GM12878 (cell line): ENCODE measurements at regions of chrX and their contacts with region 1.

Region 1: GRCh38 chrX:136694431-136695087 is 46.6 kb downstream of the CD40LG start:
- DNase-seq: no peak
- ATAC-seq: peak; percentile 89
- H3K4me3 ChIP-seq: no peak overlapping the region
- H3K27ac ChIP-seq: peak overlapping the region; percentile 35
- H3K4me1 ChIP-seq: peaks cover 20% of the 10 kb centered on the region
- H3K27me3 ChIP-seq: no peaks in the 10 kb centered on the region; a peak in 1 of 4 replicates
- CTCF ChIP-seq: peak; percentile 72 to 85 (median 72)
- EP300 ChIP-seq: no peak
- POLR2A ChIP-seq: no peak
- RAD21 ChIP-seq: peak; percentile 96

Region 2: GRCh38 chrX:136028251-136028984 is 666.1 kb before region 1 on chrX:
- CTCF ChIA-PET with region 1: interaction called, 14 read pairs
- POLR2A ChIA-PET with region 1: no interaction called
- RAD21 ChIA-PET with region 1: interaction called, 11 read pairs
- SMC1A ChIA-PET with region 1: interaction called, 11 read pairs
- in situ Hi-C with region 1: loop called (anchors 10 kb)
- intact Hi-C with region 1: loop called (anchors 5 kb)
- DNase-seq: no peak
- ATAC-seq: peak; percentile 81
- H3K4me3 ChIP-seq: no peak overlapping the region
- H3K27ac ChIP-seq: no peak overlapping the region
- H3K4me1 ChIP-seq: no peaks in the 10 kb centered on the region
- H3K27me3 ChIP-seq: no peaks in the 10 kb centered on the region
- CTCF ChIP-seq: peak; percentile 44 to 64 (median 62); a peak in 5 of 6 replicates
- EP300 ChIP-seq: no peak
- POLR2A ChIP-seq: no peak
- RAD21 ChIP-seq: peak; percentile 82

Region 3: GRCh38 chrX:136275553-136275952 is 419.0 kb before region 1 on chrX:
- CTCF ChIA-PET with region 1: interaction called, 6 read pairs
- POLR2A ChIA-PET with region 1: no interaction called
- RAD21 ChIA-PET with region 1: interaction called, 6 read pairs
- SMC1A ChIA-PET with region 1: interaction called, 7 read pairs
- in situ Hi-C with region 1: no loop called
- intact Hi-C with region 1: loop called (anchors 5 kb)
- DNase-seq: no peak
- ATAC-seq: no peak
- H3K4me3 ChIP-seq: no peak overlapping the region
- H3K27ac ChIP-seq: no peak overlapping the region
- H3K4me1 ChIP-seq: no peaks in the 10 kb centered on the region; the same call in 1 of the 2 replicates
- H3K27me3 ChIP-seq: no peaks in the 10 kb centered on the region
- CTCF ChIP-seq: no peak
- EP300 ChIP-seq: no peak
- POLR2A ChIP-seq: no peak
- RAD21 ChIP-seq: no peak

Region 4: DNA sequence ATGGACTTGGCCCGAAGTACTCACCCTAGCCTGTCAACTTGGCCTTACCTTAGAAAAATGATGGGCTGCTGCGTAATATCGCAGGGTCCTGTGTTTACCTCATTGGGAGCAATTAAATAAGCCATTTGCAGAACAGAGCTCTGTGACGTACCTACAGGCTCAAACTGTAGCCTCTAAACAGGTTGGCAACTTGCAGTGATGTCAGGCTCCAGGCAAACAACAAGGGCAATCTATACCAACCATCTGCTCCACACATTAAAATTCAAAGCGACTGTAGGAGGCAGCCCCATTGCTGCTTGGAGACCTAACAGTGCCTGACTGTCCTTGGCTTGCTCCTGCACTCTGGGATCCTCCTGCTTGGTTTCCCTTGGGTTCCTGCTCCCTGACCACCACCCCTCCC is 145.3 kb before region 1 on chrX:
- CTCF ChIA-PET with region 1: no interaction called
- POLR2A ChIA-PET with region 1: no interaction called
- RAD21 ChIA-PET with region 1: no interaction called
- SMC1A ChIA-PET with region 1: no interaction called
- in situ Hi-C with region 1: no loop called
- intact Hi-C with region 1: no loop called
- DNase-seq: no peak
- ATAC-seq: no peak
- H3K4me3 ChIP-seq: no peak overlapping the region
- H3K27ac ChIP-seq: no peak overlapping the region
- H3K4me1 ChIP-seq: no peaks in the 10 kb centered on the region
- H3K27me3 ChIP-seq: no peaks in the 10 kb centered on the region; a peak in 1 of 4 replicates
- CTCF ChIP-seq: no peak
- EP300 ChIP-seq: no peak
- POLR2A ChIP-seq: no peak
- RAD21 ChIP-seq: no peak

Region 5: GRCh38 chrX:136572030-136572429 is 122.5 kb before region 1 on chrX:
- CTCF ChIA-PET with region 1: interaction called, 48 read pairs
- POLR2A ChIA-PET with region 1: interaction called, 3 read pairs
- RAD21 ChIA-PET with region 1: interaction called, 20 read pairs
- SMC1A ChIA-PET with region 1: interaction called, 49 read pairs
- in situ Hi-C with region 1: no loop called
- intact Hi-C with region 1: loop called (anchors 1 kb)
- DNase-seq: no peak
- ATAC-seq: peak; percentile 72
- H3K4me3 ChIP-seq: no peak overlapping the region
- H3K27ac ChIP-seq: no peak overlapping the region
- H3K4me1 ChIP-seq: no peaks in the 10 kb centered on the region
- H3K27me3 ChIP-seq: no peaks in the 10 kb centered on the region
- CTCF ChIP-seq: peak in 1 of 3 experiments; percentile 40; a peak in 1 of 6 replicates
- EP300 ChIP-seq: no peak
- POLR2A ChIP-seq: no peak
- RAD21 ChIP-seq: peak; percentile 40

Region 6: DNA sequence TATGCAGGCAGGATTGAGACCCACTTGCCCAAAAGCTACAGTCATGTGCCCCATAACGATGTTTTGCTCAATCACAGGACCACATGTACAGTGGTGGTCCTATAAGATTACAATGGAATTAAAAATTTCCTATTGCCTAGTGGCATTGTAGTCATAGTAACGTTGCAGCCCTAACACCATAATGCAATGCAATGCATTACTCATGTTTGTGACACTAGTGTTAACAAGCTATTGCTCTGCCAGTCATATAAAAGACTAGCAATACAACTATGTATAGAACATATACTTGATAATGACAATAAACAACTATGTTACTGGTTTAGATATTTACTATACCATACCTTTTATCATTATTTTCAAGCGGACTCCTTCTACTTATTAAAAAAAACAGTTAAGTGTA is 111.9 kb before region 1 on chrX:
- CTCF ChIA-PET with region 1: interaction called, 48 read pairs
- POLR2A ChIA-PET with region 1: no interaction called
- RAD21 ChIA-PET with region 1: interaction called, 20 read pairs
- SMC1A ChIA-PET with region 1: interaction called, 49 read pairs
- in situ Hi-C with region 1: no loop called
- intact Hi-C with region 1: loop called (anchors 1 kb)
- DNase-seq: no peak
- ATAC-seq: no peak
- H3K4me3 ChIP-seq: no peak overlapping the region
- H3K27ac ChIP-seq: no peak overlapping the region
- H3K4me1 ChIP-seq: peaks cover 22% of the 10 kb centered on the region
- H3K27me3 ChIP-seq: no peaks in the 10 kb centered on the region
- CTCF ChIP-seq: no peak
- EP300 ChIP-seq: no peak
- POLR2A ChIP-seq: no peak
- RAD21 ChIP-seq: no peak

Region 7: GRCh38 chrX:136616987-136617685 is 77.4 kb before region 1 on chrX:
- CTCF ChIA-PET with region 1: interaction called, 104 read pairs
- POLR2A ChIA-PET with region 1: no interaction called
- RAD21 ChIA-PET with region 1: interaction called, 8 read pairs
- SMC1A ChIA-PET with region 1: interaction called, 6 read pairs
- in situ Hi-C with region 1: no loop called
- intact Hi-C with region 1: no loop called
- DNase-seq: no peak
- ATAC-seq: peak; percentile 97
- H3K4me3 ChIP-seq: no peak overlapping the region
- H3K27ac ChIP-seq: peak overlapping the region; percentile 20; the same call in 1 of the 2 replicates
- H3K4me1 ChIP-seq: peaks cover 5% of the 10 kb centered on the region; the same call in 1 of the 2 replicates
- H3K27me3 ChIP-seq: no peaks in the 10 kb centered on the region
- CTCF ChIP-seq: no peak
- EP300 ChIP-seq: no peak
- POLR2A ChIP-seq: no peak
- RAD21 ChIP-seq: no peak

Region 8: DNA sequence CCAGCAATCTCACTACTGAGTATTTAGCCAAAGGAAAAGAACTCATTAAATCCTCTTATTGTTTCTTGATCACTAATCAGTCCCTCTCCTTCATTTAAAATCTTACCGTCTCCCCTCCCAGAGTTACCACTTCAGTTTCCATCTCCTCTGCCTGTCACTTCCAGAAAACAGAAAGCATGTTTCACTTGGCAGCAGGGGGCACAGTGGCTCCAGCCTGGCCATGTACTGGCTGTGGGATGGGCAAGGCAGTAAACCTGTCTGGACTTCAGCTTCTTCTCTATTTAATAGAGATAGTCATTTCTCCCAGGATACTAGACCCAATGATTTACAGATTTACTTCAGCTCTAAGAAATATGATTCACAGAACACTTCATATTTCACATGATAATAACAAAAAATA is 16.6 kb after region 1 on chrX:
- CTCF ChIA-PET with region 1: interaction called, 29 read pairs
- POLR2A ChIA-PET with region 1: no interaction called
- RAD21 ChIA-PET with region 1: interaction called, 6 read pairs
- SMC1A ChIA-PET with region 1: interaction called, 11 read pairs
- in situ Hi-C with region 1: no loop called
- intact Hi-C with region 1: no loop called
- DNase-seq: no peak
- ATAC-seq: peak; percentile 58
- H3K4me3 ChIP-seq: no peak overlapping the region
- H3K27ac ChIP-seq: peak overlapping the region; percentile 74; the same call in 1 of the 2 replicates
- H3K4me1 ChIP-seq: peaks cover 11% of the 10 kb centered on the region
- H3K27me3 ChIP-seq: no peaks in the 10 kb centered on the region
- CTCF ChIP-seq: peak; percentile 29 to 54 (median 32); a peak in 4 of 6 replicates
- EP300 ChIP-seq: no peak
- POLR2A ChIP-seq: no peak
- RAD21 ChIP-seq: peak; percentile 77

Region 9: GRCh38 chrX:136789856-136790255 is 95.3 kb after region 1 on chrX:
- CTCF ChIA-PET with region 1: no interaction called
- POLR2A ChIA-PET with region 1: no interaction called
- RAD21 ChIA-PET with region 1: no interaction called
- SMC1A ChIA-PET with region 1: no interaction called
- in situ Hi-C with region 1: no loop called
- intact Hi-C with region 1: no loop called
- DNase-seq: no peak
- ATAC-seq: no peak
- H3K4me3 ChIP-seq: no peak overlapping the region
- H3K27ac ChIP-seq: no peak overlapping the region
- H3K4me1 ChIP-seq: no peaks in the 10 kb centered on the region
- H3K27me3 ChIP-seq: no peaks in the 10 kb centered on the region
- CTCF ChIP-seq: no peak
- EP300 ChIP-seq: no peak
- POLR2A ChIP-seq: no peak
- RAD21 ChIP-seq: no peak